ENCODE measurements at regions of chr14 and their contacts with region 1.

Region 1: GRCh38 chr14:56555921-56556570 is 23.6 kb upstream of the TMEM260 start:
- DNase-seq: no peak
- H3K4me3 ChIP-seq: no peak overlapping the region
- H3K27ac ChIP-seq: no peak overlapping the region
- H3K4me1 ChIP-seq: peaks cover 0 to 3% (median 0%) of the 10 kb centered on the region in 4 donors
- H3K27me3 ChIP-seq: peaks cover 5% of the 10 kb centered on the region
- CTCF ChIP-seq: peak; percentile 11 to 63 (median 38)
- EP300 ChIP-seq: no peak
- POLR2A ChIP-seq: no peak

Region 2: GRCh38 chr14:57199921-57200320 is 643.9 kb after region 1 on chr14:
- in situ Hi-C with region 1: loop called in 1 of 4 experiments (anchors 10 kb)
- intact Hi-C with region 1: no loop called
- DNase-seq: no peak
- H3K4me3 ChIP-seq: no peak overlapping the region
- H3K27ac ChIP-seq: no peak overlapping the region
- H3K4me1 ChIP-seq: no peaks in the 10 kb centered on the region
- H3K27me3 ChIP-seq: no peaks in the 10 kb centered on the region
- CTCF ChIP-seq: no peak
- EP300 ChIP-seq: no peak
- POLR2A ChIP-seq: no peak